ENCODE measurements at regions of chr2 and their contacts with region 1.

Region 1: GRCh38 chr2:60550178-60550983 is 3.1 kb downstream of the BCL11A start:
- DNase-seq: peak; percentile 80
- ATAC-seq: peak; percentile 47
- H3K4me3 Mint-ChIP-seq: peak overlapping the region; percentile 91
- H3K27ac Mint-ChIP-seq: peak overlapping the region; percentile 93
- H3K4me1 Mint-ChIP-seq: peaks cover 36% of the 10 kb centered on the region
- H3K27me3 Mint-ChIP-seq: no peaks in the 10 kb centered on the region
- CTCF ChIP-seq: peak; percentile 30; the same call in 1 of the 2 replicates

Region 2: DNA sequence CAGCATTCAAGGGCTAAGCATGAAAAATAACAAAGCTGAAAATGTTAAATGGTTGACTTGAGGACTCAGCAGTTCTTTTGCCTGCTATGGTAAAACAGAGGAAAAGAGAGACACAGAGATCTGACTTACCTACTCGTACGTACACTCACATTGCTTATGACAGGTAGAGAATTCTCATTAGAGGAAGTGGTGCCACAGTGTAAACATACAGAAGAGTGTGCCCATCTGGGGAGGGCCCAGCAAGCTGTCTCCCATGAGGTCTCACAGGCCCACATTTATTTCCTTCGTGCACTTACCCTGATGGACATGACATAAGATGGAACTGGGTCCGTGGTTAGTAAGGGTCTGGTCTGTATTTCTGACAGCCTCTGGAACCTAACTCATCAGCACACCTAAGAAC is 726.1 kb before region 1 on chr2:
- CTCF ChIA-PET with region 1: no interaction called
- POLR2A ChIA-PET with region 1: no interaction called
- DNase-seq: no peak
- ATAC-seq: no peak
- H3K4me3 Mint-ChIP-seq: no peak overlapping the region
- H3K27ac Mint-ChIP-seq: no peak overlapping the region
- H3K4me1 Mint-ChIP-seq: no peaks in the 10 kb centered on the region
- H3K27me3 Mint-ChIP-seq: no peaks in the 10 kb centered on the region
- CTCF ChIP-seq: no peak

Region 3: GRCh38 chr2:60472041-60472440 is 78.3 kb before region 1 on chr2:
- CTCF ChIA-PET with region 1: interaction called, 10 read pairs
- POLR2A ChIA-PET with region 1: no interaction called
- DNase-seq: no peak
- ATAC-seq: no peak
- H3K4me3 Mint-ChIP-seq: no peak overlapping the region
- H3K27ac Mint-ChIP-seq: no peak overlapping the region
- H3K4me1 Mint-ChIP-seq: peaks cover 83% of the 10 kb centered on the region
- H3K27me3 Mint-ChIP-seq: peaks cover 24% of the 10 kb centered on the region
- CTCF ChIP-seq: no peak

Region 4: GRCh38 chr2:60535685-60536312 is 14.6 kb before region 1 on chr2:
- CTCF ChIA-PET with region 1: interaction called, 13 read pairs
- POLR2A ChIA-PET with region 1: interaction called, 5 read pairs
- DNase-seq: no peak
- ATAC-seq: no peak
- H3K4me3 Mint-ChIP-seq: peak overlapping the region; percentile 14
- H3K27ac Mint-ChIP-seq: peak overlapping the region; percentile 85
- H3K4me1 Mint-ChIP-seq: peaks cover 97% of the 10 kb centered on the region
- H3K27me3 Mint-ChIP-seq: no peaks in the 10 kb centered on the region
- CTCF ChIP-seq: no peak

Region 5: GRCh38 chr2:60569680-60570111 is 19.3 kb after region 1 on chr2:
- CTCF ChIA-PET with region 1: interaction called, 12 read pairs
- POLR2A ChIA-PET with region 1: interaction called, 3 read pairs
- DNase-seq: no peak
- ATAC-seq: peak; percentile 45
- H3K4me3 Mint-ChIP-seq: no peak overlapping the region
- H3K27ac Mint-ChIP-seq: no peak overlapping the region
- H3K4me1 Mint-ChIP-seq: peaks cover 19% of the 10 kb centered on the region
- H3K27me3 Mint-ChIP-seq: peaks cover 9% of the 10 kb centered on the region
- CTCF ChIP-seq: no peak

Measured in WTC11 (cell line).